H1 (cell line): ENCODE measurements at regions of chr9 and their contacts with region 1.

Region 1: GRCh38 chr9:133485361-133486260 is 6.7 kb upstream of the SLC2A6 start:
- DNase-seq: no peak
- H3K4me3 ChIP-seq: no peak overlapping the region
- H3K27ac ChIP-seq: no peak overlapping the region
- H3K4me1 ChIP-seq: no peaks in the 10 kb centered on the region; a peak in 1 of 7 replicates
- H3K27me3 ChIP-seq: no peaks in the 10 kb centered on the region; a peak in 1 of 7 replicates
- CTCF ChIP-seq: no peak
- EP300 ChIP-seq: no peak
- POLR2A ChIP-seq: no peak
- RAD21 ChIP-seq: no peak

Region 2: DNA sequence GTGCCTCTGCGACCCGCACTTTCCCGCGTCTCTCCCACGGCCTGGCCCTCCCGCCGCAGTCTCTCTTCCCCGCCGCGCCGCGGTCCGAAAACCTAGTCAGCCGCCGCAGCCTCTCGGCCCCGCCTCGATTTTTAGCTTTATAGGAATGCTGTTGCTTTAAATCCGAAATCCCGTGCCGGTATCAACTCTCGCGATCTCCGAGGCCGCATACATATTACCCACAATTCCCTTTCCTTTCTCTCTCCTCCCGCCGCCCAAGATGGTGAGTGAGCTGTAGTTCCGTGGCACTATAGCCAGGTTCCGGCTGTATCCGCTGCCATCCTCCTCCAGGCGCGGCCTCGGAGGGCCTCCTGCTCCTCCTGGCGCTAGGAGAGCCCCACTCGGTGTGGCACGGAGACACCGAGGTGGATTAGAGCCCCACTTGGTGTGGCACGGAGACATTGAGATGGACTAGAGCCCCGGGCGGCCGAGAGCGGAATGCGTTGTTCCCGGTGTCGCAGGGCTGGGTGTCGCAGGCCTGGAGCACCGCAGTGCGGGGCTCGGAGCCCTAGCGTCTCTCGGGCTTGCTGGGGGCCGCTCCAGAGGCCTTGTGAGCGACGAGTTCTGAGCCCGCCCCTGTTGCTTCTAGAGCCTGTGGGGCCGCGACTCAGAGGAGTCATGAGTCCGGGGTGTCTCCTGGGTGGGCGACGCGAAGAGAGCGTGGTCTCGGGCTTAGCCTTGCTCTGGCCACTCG is 137.5 kb before region 1 on chr9 and contains the starts of genes MED22 and RPL7A:
- CTCF ChIA-PET with region 1: interaction called, 6 read pairs
- POLR2A ChIA-PET with region 1: interaction called, 12 read pairs
- DNase-seq: peak; percentile 77 to 93
- H3K4me3 ChIP-seq: peak within 1 kb of the TSS; percentile 93 to 100 (median 96)
- H3K27ac ChIP-seq: peak within 1 kb of the TSS; percentile 99
- H3K4me1 ChIP-seq: peaks cover 0 to 10% (median 7%) of the 10 kb centered on the region in 4 experiments; a peak in 6 of 7 replicates
- H3K27me3 ChIP-seq: no peaks in the 10 kb centered on the region
- CTCF ChIP-seq: no peak
- EP300 ChIP-seq: no peak
- POLR2A ChIP-seq: peak in 1 of 2 experiments; percentile 97; a peak in 1 of 3 replicates
- RAD21 ChIP-seq: no peak
- total RNA-seq, gene MED22: 56.4 and 61.8 TPM in 2 replicates
- total RNA-seq, gene RPL7A: 2,578 and 2,633 TPM in 2 replicates

Region 3: GRCh38 chr9:133356391-133357091 is 129.1 kb before region 1 on chr9 and contains the starts of genes SURF1 and SURF2:
- CTCF ChIA-PET with region 1: interaction called, 13 read pairs
- POLR2A ChIA-PET with region 1: interaction called, 6 read pairs
- DNase-seq: peak in 1 of 2 experiments; percentile 89
- H3K4me3 ChIP-seq: peak within 1 kb of the TSS; percentile 72 to 97 (median 96)
- H3K27ac ChIP-seq: no peak within 1 kb of the TSS
- H3K4me1 ChIP-seq: peaks cover 0 to 8% (median 3%) of the 10 kb centered on the region in 4 experiments; a peak in 5 of 7 replicates
- H3K27me3 ChIP-seq: no peaks in the 10 kb centered on the region
- CTCF ChIP-seq: peak in 1 of 3 experiments; percentile 12; a peak in 1 of 4 replicates
- EP300 ChIP-seq: no peak
- POLR2A ChIP-seq: peak in 1 of 2 experiments; percentile 77; a peak in 2 of 3 replicates
- RAD21 ChIP-seq: no peak
- total RNA-seq, gene SURF1: 39.6 and 43.1 TPM in 2 replicates
- total RNA-seq, gene SURF2: 36.6 and 42.1 TPM in 2 replicates

Region 4: DNA sequence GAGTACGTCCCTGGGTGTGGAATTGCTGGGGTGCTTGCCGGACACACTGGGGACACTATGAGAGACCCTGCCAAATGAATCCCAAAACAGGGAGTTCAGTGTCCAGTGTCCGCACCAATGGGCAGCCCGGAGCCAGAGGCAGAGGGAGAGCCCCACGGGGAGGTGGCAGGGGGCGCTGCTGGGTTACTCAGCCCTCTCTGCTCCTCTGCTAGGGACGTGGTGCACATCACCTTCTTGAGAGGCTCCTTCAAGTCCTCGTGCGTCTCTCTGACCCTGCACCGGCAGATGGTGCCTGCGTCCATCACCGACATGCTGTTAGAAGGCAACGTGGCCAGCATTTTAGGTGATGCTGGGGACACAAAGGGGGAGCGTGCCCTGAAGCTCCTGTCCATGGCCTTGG is 88.7 kb before region 1 on chr9:
- CTCF ChIA-PET with region 1: interaction called, 29 read pairs
- POLR2A ChIA-PET with region 1: interaction called, 5 read pairs
- DNase-seq: peak in 1 of 2 experiments; percentile 81
- H3K4me3 ChIP-seq: no peak overlapping the region
- H3K27ac ChIP-seq: no peak overlapping the region
- H3K4me1 ChIP-seq: no peaks in the 10 kb centered on the region
- H3K27me3 ChIP-seq: no peaks in the 10 kb centered on the region; a peak in 3 of 7 replicates
- CTCF ChIP-seq: peak in 2 of 3 experiments; percentile 76 to 87; a peak in 3 of 4 replicates
- EP300 ChIP-seq: no peak
- POLR2A ChIP-seq: no peak
- RAD21 ChIP-seq: peak; percentile 53 to 58

Region 5: GRCh38 chr9:133406480-133407307 is 78.9 kb before region 1 on chr9:
- CTCF ChIA-PET with region 1: interaction called, 14 read pairs
- POLR2A ChIA-PET with region 1: no interaction called
- DNase-seq: peak; percentile 49 to 89
- H3K4me3 ChIP-seq: no peak overlapping the region
- H3K27ac ChIP-seq: no peak overlapping the region
- H3K4me1 ChIP-seq: no peaks in the 10 kb centered on the region
- H3K27me3 ChIP-seq: no peaks in the 10 kb centered on the region
- CTCF ChIP-seq: peak in 2 of 3 experiments; percentile 86 to 98; a peak in 3 of 4 replicates
- EP300 ChIP-seq: no peak
- POLR2A ChIP-seq: no peak
- RAD21 ChIP-seq: peak; percentile 55 to 60

Region 6: GRCh38 chr9:133459476-133460404 is 25.9 kb before region 1 on chr9 and contains the start of gene CACFD1:
- CTCF ChIA-PET with region 1: interaction called, 21 read pairs
- POLR2A ChIA-PET with region 1: interaction called, 4 read pairs
- DNase-seq: peak; percentile 95 to 96
- H3K4me3 ChIP-seq: peak within 1 kb of the TSS; percentile 67 to 74 (median 70)
- H3K27ac ChIP-seq: peak within 1 kb of the TSS; percentile 88
- H3K4me1 ChIP-seq: peaks cover 2 to 15% (median 11%) of the 10 kb centered on the region in 4 experiments
- H3K27me3 ChIP-seq: no peaks in the 10 kb centered on the region; a peak in 1 of 7 replicates
- CTCF ChIP-seq: no peak
- EP300 ChIP-seq: no peak
- POLR2A ChIP-seq: peak in 1 of 2 experiments; percentile 85; a peak in 2 of 3 replicates
- RAD21 ChIP-seq: no peak
- total RNA-seq, gene CACFD1: 13.3 and 13.4 TPM in 2 replicates

Region 7: DNA sequence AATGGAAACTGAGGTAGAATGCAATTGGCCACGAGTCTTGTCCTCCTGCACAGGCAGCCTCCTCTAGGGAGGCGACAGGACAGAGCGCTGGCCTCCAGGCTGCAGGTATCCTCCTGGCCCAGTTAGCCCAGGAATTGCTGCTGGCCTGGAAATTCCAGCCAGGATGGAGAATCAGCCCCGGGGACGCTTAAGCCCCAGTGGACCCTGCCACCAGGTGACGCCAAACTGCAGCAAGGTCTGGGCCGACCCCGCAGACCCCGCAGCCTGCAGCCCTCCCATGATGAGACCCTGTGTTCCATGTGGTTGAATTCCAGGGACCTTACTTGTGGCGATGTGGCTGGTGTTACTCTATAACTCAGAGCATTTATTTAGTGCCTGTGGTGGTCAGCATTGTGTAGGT is 18.5 kb before region 1 on chr9:
- CTCF ChIA-PET with region 1: interaction called, 21 read pairs
- POLR2A ChIA-PET with region 1: interaction called, 19 read pairs
- DNase-seq: no peak
- H3K4me3 ChIP-seq: no peak overlapping the region
- H3K27ac ChIP-seq: no peak overlapping the region
- H3K4me1 ChIP-seq: peaks cover 0 to 3% (median 0%) of the 10 kb centered on the region in 4 experiments; a peak in 2 of 7 replicates
- H3K27me3 ChIP-seq: no peaks in the 10 kb centered on the region
- CTCF ChIP-seq: peak in 2 of 3 experiments; percentile 33 to 52; a peak in 2 of 4 replicates
- EP300 ChIP-seq: no peak
- POLR2A ChIP-seq: no peak
- RAD21 ChIP-seq: peak in 1 of 2 experiments; percentile 27; a peak in 1 of 4 replicates